Prostate gland (tissue), 2 donors: ENCODE measurements at regions of chr10 and their contacts with region 1.

Region 1: DNA sequence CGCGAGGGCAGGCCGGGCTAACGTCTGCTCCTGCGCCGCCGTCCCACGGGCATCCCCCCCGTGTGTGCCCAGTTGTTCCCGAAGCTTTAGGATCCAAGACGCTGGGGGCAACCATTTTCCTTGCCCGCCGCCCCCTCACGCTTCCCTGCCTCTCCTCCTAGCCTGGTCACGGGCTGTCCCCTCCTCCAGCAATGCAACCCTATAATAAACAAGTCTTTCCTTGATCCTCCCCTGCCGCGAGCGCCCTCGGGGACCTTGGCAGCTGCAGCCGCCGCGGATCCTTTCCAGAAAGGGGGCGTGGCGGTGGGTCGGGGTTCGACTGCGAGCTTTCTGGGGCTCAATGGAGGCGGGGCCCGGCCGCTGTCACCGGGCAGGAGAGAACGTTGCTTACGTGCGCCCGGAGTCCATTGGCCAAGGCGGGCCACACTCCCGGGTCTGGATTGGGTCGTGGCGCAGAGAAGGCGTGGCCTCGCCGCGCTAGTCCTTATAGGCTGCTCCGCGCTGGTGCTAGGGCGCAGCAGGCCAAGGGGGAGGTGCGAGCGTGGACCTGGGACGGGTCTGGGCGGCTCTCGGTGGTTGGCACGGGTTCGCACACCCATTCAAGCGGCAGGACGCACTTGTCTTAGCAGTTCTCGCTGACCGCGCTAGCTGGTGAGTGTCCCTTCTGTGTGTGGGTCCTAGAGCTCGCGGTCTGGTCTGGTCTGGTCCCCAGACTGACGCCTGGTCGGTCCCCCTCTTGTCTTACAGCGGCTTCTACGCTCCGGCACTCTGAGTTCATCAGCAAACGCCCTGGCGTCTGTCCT is at the start of gene DDIT4:
- DNase-seq: peak; percentile 99
- H3K4me3 ChIP-seq: peak within 1 kb of the TSS; percentile 71 to 76
- H3K27ac ChIP-seq: peak within 1 kb of the TSS; percentile 97 to 98
- H3K4me1 ChIP-seq: no peaks in the 10 kb centered on the region
- H3K27me3 ChIP-seq: no peaks in the 10 kb centered on the region
- CTCF ChIP-seq: peak in 2 of 4 experiments; percentile 35
- POLR2A ChIP-seq: peak; percentile 100
- total RNA-seq, gene DDIT4: 259 to 265 TPM

Region 2: GRCh38 chr10:72133517-72133916 is 140.1 kb before region 1 on chr10:
- intact Hi-C with region 1: loop called (anchors 10 kb)
- DNase-seq: no peak
- H3K4me3 ChIP-seq: no peak overlapping the region
- H3K27ac ChIP-seq: no peak overlapping the region
- H3K4me1 ChIP-seq: no peaks in the 10 kb centered on the region
- H3K27me3 ChIP-seq: no peaks in the 10 kb centered on the region
- CTCF ChIP-seq: no peak
- POLR2A ChIP-seq: no peak

Region 3: DNA sequence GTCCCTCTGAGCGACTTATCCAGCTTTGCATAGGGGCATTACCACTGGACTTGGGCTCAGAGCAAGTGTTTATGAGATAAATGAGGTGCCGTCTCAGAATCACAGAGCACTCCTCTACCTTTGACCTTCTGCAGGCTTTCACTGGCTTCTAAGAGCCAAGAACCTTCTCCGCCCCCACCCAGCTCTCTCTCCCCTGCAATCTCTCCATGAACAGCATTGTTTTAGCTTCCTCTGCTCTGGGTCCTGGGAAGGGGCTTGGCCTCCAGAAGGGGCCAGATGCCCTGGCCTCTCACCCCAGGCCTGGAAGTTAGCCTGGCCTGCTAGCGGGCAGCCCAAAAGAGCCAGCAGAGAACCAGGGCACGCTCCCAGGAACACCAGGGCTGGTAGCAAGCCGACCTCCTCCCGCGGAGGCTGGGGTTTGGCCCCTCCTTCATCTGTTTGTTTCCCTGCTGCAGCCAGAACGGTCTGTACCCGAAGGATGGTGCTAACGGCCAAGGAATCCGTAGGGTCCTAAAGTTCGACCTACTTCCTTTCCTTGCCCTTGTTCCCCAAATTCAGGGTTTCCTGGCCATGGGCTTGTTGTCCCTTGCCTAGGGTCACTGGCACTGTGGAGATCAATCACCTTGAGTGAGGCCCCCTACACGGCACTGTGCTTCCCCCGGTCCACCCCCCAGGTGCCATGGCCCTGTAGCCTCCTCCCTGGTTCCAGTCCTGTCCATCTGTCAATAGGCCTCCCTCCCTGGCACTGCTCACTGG is 18.6 kb before region 1 on chr10:
- intact Hi-C with region 1: loop called (anchors 2 kb)
- DNase-seq: peak; percentile 94
- H3K4me3 ChIP-seq: no peak overlapping the region
- H3K27ac ChIP-seq: peak overlapping the region; percentile 88 to 91
- H3K4me1 ChIP-seq: peaks cover 32% of the 10 kb centered on the region
- H3K27me3 ChIP-seq: no peaks in the 10 kb centered on the region
- CTCF ChIP-seq: peak in 1 of 4 experiments; percentile 11
- POLR2A ChIP-seq: peak; percentile 55

Region 4: GRCh38 chr10:72319416-72320254 is 46.0 kb after region 1 on chr10:
- intact Hi-C with region 1: loop called (anchors 5 kb)
- DNase-seq: peak; percentile 92
- H3K4me3 ChIP-seq: peak overlapping the region; percentile 24 to 34
- H3K27ac ChIP-seq: peak overlapping the region; percentile 81 to 83
- H3K4me1 ChIP-seq: peaks cover 20% of the 10 kb centered on the region
- H3K27me3 ChIP-seq: no peaks in the 10 kb centered on the region
- CTCF ChIP-seq: peak in 2 of 4 experiments; percentile 20 to 26
- POLR2A ChIP-seq: peak; percentile 37

Region 5: GRCh38 chr10:72337020-72337629 is 63.5 kb after region 1 on chr10:
- intact Hi-C with region 1: loop called (anchors 2 kb)
- DNase-seq: peak; percentile 79
- H3K4me3 ChIP-seq: no peak overlapping the region
- H3K27ac ChIP-seq: peak overlapping the region; percentile 86 to 87
- H3K4me1 ChIP-seq: peaks cover 29% of the 10 kb centered on the region
- H3K27me3 ChIP-seq: no peaks in the 10 kb centered on the region
- CTCF ChIP-seq: peak; percentile 89 to 98 (median 96)
- POLR2A ChIP-seq: no peak

Region 6: GRCh38 chr10:72375585-72375984 is 102.0 kb after region 1 on chr10:
- intact Hi-C with region 1: no loop called
- DNase-seq: no peak
- H3K4me3 ChIP-seq: no peak overlapping the region
- H3K27ac ChIP-seq: no peak overlapping the region
- H3K4me1 ChIP-seq: no peaks in the 10 kb centered on the region
- H3K27me3 ChIP-seq: no peaks in the 10 kb centered on the region
- CTCF ChIP-seq: no peak
- POLR2A ChIP-seq: no peak